Heart right ventricle (tissue), 16 donors: ENCODE measurements at regions of chr4 and their contacts with region 1.

Region 1: DNA sequence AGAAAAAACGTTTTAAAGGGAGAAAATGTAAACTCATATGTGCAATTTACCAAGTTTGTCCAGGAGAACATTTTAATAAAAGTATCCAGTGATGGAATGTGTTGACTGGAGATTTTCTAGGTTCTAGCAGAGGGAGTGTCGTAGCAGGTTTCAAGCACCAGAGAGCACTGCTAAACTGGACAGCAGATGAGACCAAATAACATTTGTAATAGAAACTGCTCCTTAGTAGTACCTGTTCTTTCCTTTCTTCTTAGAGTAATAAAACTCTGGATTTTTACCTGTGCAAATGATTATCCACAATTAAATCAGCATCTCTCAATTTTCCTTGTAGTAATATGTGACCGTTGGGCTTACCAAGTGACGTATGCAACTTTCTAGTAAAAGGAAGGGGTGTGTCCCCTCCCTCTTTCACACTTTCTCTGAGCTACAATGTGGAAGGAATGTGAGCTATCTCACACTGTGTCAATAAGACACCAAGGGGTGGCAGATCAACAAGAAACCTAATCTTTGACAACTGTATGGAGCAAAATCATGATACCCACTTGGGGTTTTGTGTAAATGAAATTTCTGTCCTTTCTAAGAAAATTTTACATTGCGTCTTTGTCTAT is 9.5 kb downstream of the HPGDS start:
- DNase-seq: no peak
- ATAC-seq: peak in 7 of 8 donors; percentile 67 to 86 (median 77)
- H3K4me3 ChIP-seq: no peak overlapping the region
- H3K27ac ChIP-seq: no peak overlapping the region
- H3K4me1 ChIP-seq: peaks cover 0 to 17% (median 6%) of the 10 kb centered on the region in 9 donors
- H3K27me3 ChIP-seq: no peaks in the 10 kb centered on the region
- CTCF ChIP-seq: peak; percentile 15 to 64 (median 49)

Region 2: GRCh38 chr4:94290245-94290644 is 42.8 kb before region 1 on chr4:
- intact Hi-C with region 1: no loop called
- DNase-seq: no peak
- ATAC-seq: no peak
- H3K4me3 ChIP-seq: no peak overlapping the region
- H3K27ac ChIP-seq: no peak overlapping the region
- H3K4me1 ChIP-seq: no peaks in the 10 kb centered on the region
- H3K27me3 ChIP-seq: no peaks in the 10 kb centered on the region
- CTCF ChIP-seq: no peak

Region 3: GRCh38 chr4:94390804-94391410 is 57.8 kb after region 1 on chr4:
- intact Hi-C with region 1: loop called in 2 of 10 experiments (anchors 5 to 10 kb)
- DNase-seq: no peak
- ATAC-seq: no peak
- H3K4me3 ChIP-seq: no peak overlapping the region
- H3K27ac ChIP-seq: no peak overlapping the region
- H3K4me1 ChIP-seq: no peaks in the 10 kb centered on the region
- H3K27me3 ChIP-seq: no peaks in the 10 kb centered on the region
- CTCF ChIP-seq: peak in 7 of 9 donors; percentile 43 to 63 (median 55)

Region 4: GRCh38 chr4:94732358-94732698 is 399.2 kb after region 1 on chr4:
- intact Hi-C with region 1: loop called in 2 of 10 experiments (anchors 10 kb)
- DNase-seq: no peak
- ATAC-seq: no peak
- H3K4me3 ChIP-seq: no peak overlapping the region
- H3K27ac ChIP-seq: no peak overlapping the region
- H3K4me1 ChIP-seq: no peaks in the 10 kb centered on the region
- H3K27me3 ChIP-seq: peaks cover 0 to 9% (median 0%) of the 10 kb centered on the region in 7 donors
- CTCF ChIP-seq: no peak